ENCODE measurements at regions of chr7 and their contacts with region 1.

Region 1: GRCh38 chr7:145065473-145065872 is 229.6 kb upstream of the TPK1 start:
- DNase-seq: no peak
- ATAC-seq: no peak
- H3K4me3 Mint-ChIP-seq: no peak overlapping the region
- H3K27ac Mint-ChIP-seq: no peak overlapping the region
- H3K4me1 Mint-ChIP-seq: no peaks in the 10 kb centered on the region
- H3K27me3 Mint-ChIP-seq: peaks cover 0 to 6% (median 0%) of the 10 kb centered on the region in 5 donors

Region 2: GRCh38 chr7:144805627-144806239 is 259.7 kb before region 1 on chr7:
- POLR2A ChIA-PET with region 1: interaction called, 10 read pairs
- DNase-seq: no peak
- ATAC-seq: no peak
- H3K4me3 Mint-ChIP-seq: no peak overlapping the region
- H3K27ac Mint-ChIP-seq: peak overlapping the region in 5 of 10 donors; percentile 14 to 66 (median 37)
- H3K4me1 Mint-ChIP-seq: peaks cover 29 to 56% (median 48%) of the 10 kb centered on the region in 4 donors
- H3K27me3 Mint-ChIP-seq: no peaks in the 10 kb centered on the region

Region 3: GRCh38 chr7:145106001-145106400 is 40.5 kb after region 1 on chr7:
- POLR2A ChIA-PET with region 1: no interaction called
- DNase-seq: no peak
- ATAC-seq: no peak
- H3K4me3 Mint-ChIP-seq: no peak overlapping the region
- H3K27ac Mint-ChIP-seq: no peak overlapping the region
- H3K4me1 Mint-ChIP-seq: no peaks in the 10 kb centered on the region
- H3K27me3 Mint-ChIP-seq: peaks cover 0 to 12% (median 3%) of the 10 kb centered on the region in 5 donors